ENCODE measurements at regions of chr17 and their contacts with region 1.

Region 1: GRCh38 chr17:18038861-18039534 is at the starts of genes ATPAF2 and GID4:
- DNase-seq: peak; percentile 99
- H3K4me3 ChIP-seq: peak within 1 kb of the TSS; percentile 87 to 90
- H3K27ac ChIP-seq: peak within 1 kb of the TSS; percentile 88
- H3K4me1 ChIP-seq: peaks cover 40% of the 10 kb centered on the region
- H3K27me3 ChIP-seq: no peaks in the 10 kb centered on the region
- CTCF ChIP-seq: no peak
- POLR2A ChIP-seq: no peak
- total RNA-seq, gene ATPAF2: 15.5 TPM
- total RNA-seq, gene GID4: 11.3 TPM

Region 2: DNA sequence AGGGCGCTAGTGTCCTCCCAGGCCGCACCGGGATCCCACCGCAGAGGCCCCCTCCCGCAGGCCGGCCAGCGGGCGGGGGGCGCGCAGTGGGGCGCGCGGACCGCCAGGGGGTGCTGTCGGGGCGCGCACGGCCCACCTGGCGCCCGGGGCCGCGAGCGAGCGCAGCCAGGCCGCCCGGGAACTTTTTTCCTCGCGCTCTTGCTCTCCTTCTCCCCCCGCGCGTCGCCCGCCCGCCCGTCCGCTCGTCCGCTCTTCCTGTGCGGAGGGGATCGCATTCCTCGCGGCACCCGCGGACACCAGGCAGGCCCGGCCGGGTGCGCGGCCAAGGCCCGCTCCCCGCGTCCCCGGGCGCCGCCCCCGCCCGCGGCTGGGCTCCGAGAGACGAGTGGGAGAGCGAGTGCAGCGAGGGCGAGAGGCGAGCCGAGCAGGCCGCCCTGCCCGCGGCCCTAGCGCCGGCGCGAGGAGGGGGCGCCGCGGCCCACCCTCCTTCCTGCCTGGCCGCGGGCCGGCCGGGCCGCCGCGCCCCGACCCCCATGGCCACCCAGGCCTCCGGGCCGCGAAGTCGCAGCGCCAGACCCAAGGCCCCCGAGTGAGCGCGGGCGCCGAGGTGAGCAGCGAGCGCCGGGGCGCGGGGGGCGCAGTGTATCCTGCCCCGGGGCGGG is 357.7 kb before region 1 on chr17 and contains the start of gene RAI1:
- intact Hi-C with region 1: loop called (anchors 5 kb)
- DNase-seq: no peak
- H3K4me3 ChIP-seq: peak within 1 kb of the TSS; percentile 72 to 99
- H3K27ac ChIP-seq: peak within 1 kb of the TSS; percentile 95
- H3K4me1 ChIP-seq: peaks cover 38% of the 10 kb centered on the region
- H3K27me3 ChIP-seq: no peaks in the 10 kb centered on the region
- CTCF ChIP-seq: peak in 2 of 3 experiments; percentile 44 to 74
- POLR2A ChIP-seq: peak in 1 of 2 donors; percentile 48
- total RNA-seq, gene RAI1: 29.2 TPM

Region 3: DNA sequence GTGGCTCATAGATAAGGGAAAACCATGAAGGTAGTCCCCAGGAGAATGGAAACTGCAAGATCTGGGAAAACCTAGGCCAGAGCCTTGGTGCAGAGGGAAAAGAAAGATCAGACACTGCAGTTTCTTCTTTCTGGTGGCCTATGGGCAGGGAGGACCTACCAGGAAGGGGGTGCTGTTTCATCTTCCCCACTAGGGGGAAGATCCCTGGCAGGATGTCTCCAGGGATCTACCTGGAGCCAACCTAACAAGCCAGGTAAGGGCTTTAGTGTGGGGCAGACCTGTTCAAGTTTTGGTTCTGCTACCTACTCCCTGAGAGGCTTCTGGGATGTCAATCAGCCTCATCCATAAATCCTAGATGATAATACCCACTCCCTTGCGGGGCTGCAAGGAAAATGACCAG is 88.2 kb before region 1 on chr17:
- intact Hi-C with region 1: no loop called
- DNase-seq: no peak
- H3K4me3 ChIP-seq: no peak overlapping the region
- H3K27ac ChIP-seq: no peak overlapping the region
- H3K4me1 ChIP-seq: peaks cover 39% of the 10 kb centered on the region
- H3K27me3 ChIP-seq: no peaks in the 10 kb centered on the region
- CTCF ChIP-seq: no peak
- POLR2A ChIP-seq: no peak

Measured in vagina (tissue), 2 donors.